Heart right ventricle (tissue), 16 donors: ENCODE measurements at regions of chr16 and their contacts with region 1.

Region 1: DNA sequence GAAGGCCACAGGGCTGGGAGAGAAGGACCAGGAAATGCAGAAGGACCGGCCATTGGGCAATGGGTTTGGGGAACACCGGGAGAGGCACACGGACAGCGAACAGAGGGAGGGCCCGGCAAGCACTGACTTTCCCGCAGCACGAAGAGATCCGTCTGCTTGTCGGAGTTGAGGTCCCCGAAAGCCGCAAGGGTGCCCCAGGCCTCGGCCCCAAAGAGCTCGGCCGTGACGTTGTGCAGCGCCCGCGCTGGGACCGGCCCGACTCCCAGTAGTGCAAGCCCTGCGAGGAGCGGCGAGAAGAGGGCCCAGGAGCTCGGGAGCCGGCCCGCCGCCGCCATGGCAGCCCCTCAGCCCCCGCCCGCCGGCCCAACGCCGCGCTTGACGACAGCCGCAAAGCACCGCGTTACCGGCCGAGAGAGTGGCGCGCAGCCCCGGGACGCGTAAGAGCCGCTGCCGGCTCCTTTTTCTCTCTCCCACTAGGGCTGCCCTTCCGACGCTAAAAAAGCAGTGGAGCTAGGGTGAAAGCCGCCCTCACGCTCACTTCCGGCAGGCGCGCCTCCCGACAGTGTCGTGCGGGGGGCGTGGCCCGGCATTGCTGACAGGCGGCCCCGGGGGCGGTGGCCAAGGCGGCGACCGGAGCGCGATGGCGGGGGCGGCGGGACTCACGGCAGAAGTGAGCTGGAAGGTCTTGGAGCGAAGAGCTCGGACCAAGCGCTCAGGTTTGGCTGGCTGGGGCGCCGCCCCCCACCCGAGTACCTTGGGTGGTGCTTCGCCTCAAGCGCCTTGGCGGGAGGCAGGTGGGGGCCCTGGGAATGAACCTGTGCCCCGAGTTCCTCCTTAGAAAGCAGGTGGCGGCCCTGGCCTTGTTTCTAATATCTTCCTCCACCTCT is at the starts of genes ITFG1 and PHKB:
- DNase-seq: peak; percentile 93
- ATAC-seq: peak; percentile 93 to 97 (median 96)
- H3K4me3 ChIP-seq: peak within 1 kb of the TSS; percentile 53 to 97 (median 88)
- H3K27ac ChIP-seq: peak within 1 kb of the TSS; percentile 98 to 100 (median 99)
- H3K4me1 ChIP-seq: peaks cover 10 to 68% (median 57%) of the 10 kb centered on the region in 9 donors
- H3K27me3 ChIP-seq: no peaks in the 10 kb centered on the region
- CTCF ChIP-seq: peak in 4 of 9 donors; percentile 21 to 31 (median 26)
- total RNA-seq, gene ITFG1: 64.2 to 94.5 (median 75.4) TPM
- total RNA-seq, gene PHKB: 61.2 to 76.6 (median 64.5) TPM

Region 2: GRCh38 chr16:47136101-47136820 is 324.7 kb before region 1 on chr16:
- intact Hi-C with region 1: loop called in 1 of 10 experiments (anchors 10 kb)
- DNase-seq: peak in 1 of 2 donors; percentile 44
- ATAC-seq: peak in 4 of 8 donors; percentile 52 to 80 (median 74)
- H3K4me3 ChIP-seq: no peak overlapping the region
- H3K27ac ChIP-seq: peak overlapping the region in 7 of 10 donors; percentile 16 to 67 (median 27)
- H3K4me1 ChIP-seq: peaks cover 0 to 9% (median 0%) of the 10 kb centered on the region in 9 donors
- H3K27me3 ChIP-seq: no peaks in the 10 kb centered on the region
- CTCF ChIP-seq: no peak

Region 3: DNA sequence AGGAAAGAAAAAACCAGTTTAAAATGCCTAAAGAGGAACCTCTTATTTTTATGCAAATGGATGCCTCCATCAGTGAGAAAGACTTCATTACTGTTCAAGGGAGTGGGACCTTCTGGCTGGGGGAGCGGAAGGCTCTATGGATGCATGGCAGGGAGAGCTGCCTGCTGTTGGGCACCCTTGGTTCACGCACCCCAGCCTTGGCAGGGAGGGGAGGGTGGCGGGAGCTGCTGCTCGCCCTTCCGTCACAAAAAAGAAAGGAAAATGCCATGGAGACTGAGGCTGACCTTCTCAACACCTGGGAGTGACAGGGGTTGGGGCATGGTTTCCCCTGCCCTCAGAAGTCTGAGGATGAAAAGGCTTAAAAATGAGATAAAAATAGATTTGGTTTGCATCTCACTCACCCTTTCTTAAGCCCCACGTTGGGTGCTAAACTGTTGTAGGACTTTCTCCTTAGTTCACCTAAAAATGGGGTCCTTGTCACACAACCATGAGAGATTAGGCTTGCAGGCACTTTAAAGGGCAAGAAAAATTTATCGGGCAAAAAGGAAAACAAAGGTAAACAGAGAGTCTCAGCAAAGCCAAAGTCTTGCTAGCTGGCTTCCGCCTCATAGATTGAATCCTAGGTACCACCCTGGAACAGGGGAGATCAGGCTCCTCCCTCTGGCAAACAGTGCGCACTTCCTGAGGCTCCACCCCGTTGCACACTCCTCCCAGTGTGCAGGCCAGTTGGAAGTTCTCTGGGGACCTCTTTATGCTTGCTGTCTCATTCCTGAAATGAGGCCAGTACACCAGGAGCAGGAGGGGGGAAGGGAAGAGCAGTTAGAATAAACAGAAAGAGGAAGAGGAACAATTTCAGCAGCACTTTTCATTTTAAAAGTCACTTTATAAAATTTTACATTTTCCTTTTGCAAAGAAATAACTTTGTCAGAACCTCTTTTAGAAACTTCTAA is 31.7 kb after region 1 on chr16:
- intact Hi-C with region 1: loop called in 2 of 10 experiments (anchors 1 to 2 kb)
- DNase-seq: peak; percentile 79 to 93
- ATAC-seq: peak; percentile 98 to 100 (median 100)
- H3K4me3 ChIP-seq: peak overlapping the region in 6 of 10 donors; percentile 20 to 30 (median 26)
- H3K27ac ChIP-seq: peak overlapping the region; percentile 56 to 90 (median 81)
- H3K4me1 ChIP-seq: peaks cover 6 to 44% (median 33%) of the 10 kb centered on the region in 9 donors
- H3K27me3 ChIP-seq: no peaks in the 10 kb centered on the region
- CTCF ChIP-seq: peak in 1 of 9 donors; percentile 32

Region 4: DNA sequence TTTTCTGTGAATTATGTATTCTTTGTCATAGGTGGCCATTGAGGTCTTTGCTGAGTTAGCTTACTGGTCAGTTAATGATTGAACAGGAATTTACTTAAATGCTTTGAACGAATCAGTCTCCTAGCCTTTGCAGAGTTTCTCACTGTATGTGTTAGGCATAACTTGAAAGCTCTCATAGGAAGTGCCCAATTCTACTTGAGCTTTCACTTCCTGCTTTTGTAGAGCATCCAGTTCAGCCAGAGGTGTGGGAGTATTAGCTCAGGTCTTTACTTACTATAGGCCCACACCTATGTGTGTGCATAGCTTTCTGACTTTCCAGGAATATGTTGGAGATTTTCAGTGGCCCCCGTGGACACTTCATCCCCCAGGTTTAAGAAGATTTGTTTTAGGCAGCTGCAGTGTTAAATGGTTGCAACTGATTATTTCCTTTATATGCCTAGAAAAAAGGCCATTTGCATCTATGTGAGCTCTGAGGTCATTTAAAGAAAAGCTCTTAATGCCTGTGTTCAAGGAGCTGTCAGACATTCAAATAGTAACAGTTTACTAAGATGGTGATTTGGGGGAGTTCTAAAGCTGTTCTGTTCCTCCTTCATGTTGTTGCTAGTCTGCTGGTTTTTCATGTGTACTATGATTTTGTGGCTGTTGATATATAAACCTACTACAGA is 62.5 kb after region 1 on chr16:
- intact Hi-C with region 1: loop called in 1 of 10 experiments (anchors 10 kb)
- DNase-seq: no peak
- ATAC-seq: peak in 5 of 8 donors; percentile 46 to 72 (median 66)
- H3K4me3 ChIP-seq: no peak overlapping the region
- H3K27ac ChIP-seq: peak overlapping the region in 4 of 10 donors; percentile 26 to 72 (median 50)
- H3K4me1 ChIP-seq: peaks cover 0 to 45% (median 15%) of the 10 kb centered on the region in 9 donors
- H3K27me3 ChIP-seq: no peaks in the 10 kb centered on the region
- CTCF ChIP-seq: no peak

Region 5: DNA sequence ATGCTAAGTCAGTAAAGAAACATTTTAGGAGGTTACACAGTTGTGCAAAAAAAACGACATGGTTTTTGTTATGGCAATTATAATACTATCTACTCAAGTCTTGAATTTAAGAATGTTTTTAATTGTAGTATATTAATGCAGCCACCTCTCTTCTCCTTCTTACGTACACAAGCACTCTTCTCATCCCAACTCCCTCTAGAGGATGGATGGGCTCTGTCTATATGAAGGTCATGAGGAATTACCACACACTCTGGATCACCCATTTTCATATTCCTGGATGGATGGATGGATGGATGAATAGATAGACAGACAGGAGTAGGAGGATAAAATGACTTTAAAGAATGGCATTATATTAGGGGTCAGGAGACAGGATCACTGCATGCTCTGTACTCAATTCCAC is 120.2 kb after region 1 on chr16:
- intact Hi-C with region 1: loop called in 1 of 10 experiments (anchors 10 kb)
- DNase-seq: no peak
- ATAC-seq: no peak
- H3K4me3 ChIP-seq: no peak overlapping the region
- H3K27ac ChIP-seq: no peak overlapping the region
- H3K4me1 ChIP-seq: peaks cover 0 to 7% (median 0%) of the 10 kb centered on the region in 9 donors
- H3K27me3 ChIP-seq: no peaks in the 10 kb centered on the region
- CTCF ChIP-seq: no peak